Caco-2 (cell line): ENCODE measurements at regions of chr7 and their contacts with region 1.

Region 1: DNA sequence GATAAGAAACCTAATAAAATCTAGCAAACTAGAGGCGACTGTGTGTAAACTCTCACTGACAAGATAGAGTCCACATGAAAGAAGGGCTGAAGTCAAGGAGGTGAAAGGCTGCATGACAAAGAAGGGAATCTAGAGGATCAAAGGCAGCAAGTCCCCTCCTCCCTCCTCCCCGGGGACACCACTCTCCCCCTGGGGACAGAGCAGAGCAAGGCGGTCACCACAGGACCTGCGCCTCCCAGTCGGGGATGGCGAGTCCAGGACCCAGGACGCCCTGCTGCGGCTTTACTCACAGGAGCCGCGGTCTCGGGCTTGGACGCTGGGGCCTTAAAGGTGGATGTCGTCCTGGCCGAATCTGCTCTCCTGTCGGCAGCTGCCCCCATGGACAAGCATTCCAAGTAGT is 22.4 kb downstream of the BRI3 start:
- DNase-seq: peak; percentile 89 to 94
- H3K4me3 ChIP-seq: 0 out of 2 replicates have a peak overlapping the region, but pooled peaks have one; percentile 11
- H3K4me3 Mint-ChIP-seq: peak overlapping the region; percentile 57
- H3K27ac Mint-ChIP-seq: peak overlapping the region; percentile 73
- H3K4me1 ChIP-seq: peaks cover 74% of the 10 kb centered on the region
- H3K4me1 Mint-ChIP-seq: peaks cover 66% of the 10 kb centered on the region
- H3K27me3 ChIP-seq: no peaks in the 10 kb centered on the region
- H3K27me3 Mint-ChIP-seq: no peaks in the 10 kb centered on the region
- CTCF ChIP-seq: peak in 1 of 2 experiments; percentile 27

Region 2: GRCh38 chr7:98280791-98281756 is 22.8 kb before region 1 on chr7 and contains the start of gene BRI3:
- CTCF ChIA-PET with region 1: no interaction called
- POLR2A ChIA-PET with region 1: no interaction called
- intact Hi-C with region 1: loop called (anchors 2 kb)
- DNase-seq: peak; percentile 89 to 94
- H3K4me3 ChIP-seq: peak within 1 kb of the TSS; percentile 81
- H3K4me3 Mint-ChIP-seq: peak within 1 kb of the TSS; percentile 97
- H3K27ac Mint-ChIP-seq: peak within 1 kb of the TSS; percentile 91
- H3K4me1 ChIP-seq: peaks cover 44% of the 10 kb centered on the region
- H3K4me1 Mint-ChIP-seq: peaks cover 43% of the 10 kb centered on the region
- H3K27me3 ChIP-seq: no peaks in the 10 kb centered on the region
- H3K27me3 Mint-ChIP-seq: no peaks in the 10 kb centered on the region
- CTCF ChIP-seq: no peak
- total RNA-seq, gene BRI3: 197 and 224 TPM in 2 replicates

Region 3: DNA sequence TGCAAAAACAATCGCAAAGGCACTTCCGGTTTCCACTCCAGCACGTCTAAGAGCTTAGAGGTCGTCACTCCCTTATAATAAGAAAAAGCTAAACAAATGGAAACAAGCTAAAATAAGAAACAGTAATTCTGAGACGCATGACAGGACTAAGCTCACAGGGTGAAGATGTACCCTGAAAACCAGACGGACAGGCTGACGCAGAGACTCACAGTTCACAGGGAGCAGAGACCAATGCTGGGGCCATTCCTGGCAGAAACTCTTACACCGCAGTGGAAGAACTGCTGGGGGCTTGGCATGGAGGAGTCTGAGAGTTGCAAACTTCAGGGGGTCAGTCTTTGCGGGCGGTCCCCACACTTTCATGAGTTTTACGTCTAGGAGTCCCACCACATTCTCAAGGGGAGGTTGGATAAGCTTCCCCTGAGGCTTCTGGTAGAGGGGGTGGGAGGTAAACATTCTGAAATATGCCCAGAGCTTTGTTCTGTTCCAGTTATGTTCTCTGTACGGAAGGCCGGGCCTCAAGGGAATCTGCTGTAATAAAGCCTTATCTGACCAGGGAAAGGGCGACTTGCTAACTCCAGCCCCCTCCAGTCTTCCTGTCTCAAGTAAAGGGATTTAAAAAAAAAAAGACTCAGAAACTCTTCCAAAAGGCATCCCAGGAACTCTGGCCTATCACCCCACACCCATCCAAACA is 25.3 kb after region 1 on chr7:
- CTCF ChIA-PET with region 1: no interaction called
- POLR2A ChIA-PET with region 1: no interaction called
- intact Hi-C with region 1: loop called (anchors 1 kb)
- DNase-seq: peak; percentile 78 to 88
- H3K4me3 ChIP-seq: no peak overlapping the region
- H3K4me3 Mint-ChIP-seq: peak overlapping the region; percentile 70
- H3K27ac Mint-ChIP-seq: peak overlapping the region; percentile 93
- H3K4me1 ChIP-seq: peaks cover 31% of the 10 kb centered on the region
- H3K4me1 Mint-ChIP-seq: peaks cover 41% of the 10 kb centered on the region
- H3K27me3 ChIP-seq: no peaks in the 10 kb centered on the region
- H3K27me3 Mint-ChIP-seq: no peaks in the 10 kb centered on the region
- CTCF ChIP-seq: no peak

Region 4: DNA sequence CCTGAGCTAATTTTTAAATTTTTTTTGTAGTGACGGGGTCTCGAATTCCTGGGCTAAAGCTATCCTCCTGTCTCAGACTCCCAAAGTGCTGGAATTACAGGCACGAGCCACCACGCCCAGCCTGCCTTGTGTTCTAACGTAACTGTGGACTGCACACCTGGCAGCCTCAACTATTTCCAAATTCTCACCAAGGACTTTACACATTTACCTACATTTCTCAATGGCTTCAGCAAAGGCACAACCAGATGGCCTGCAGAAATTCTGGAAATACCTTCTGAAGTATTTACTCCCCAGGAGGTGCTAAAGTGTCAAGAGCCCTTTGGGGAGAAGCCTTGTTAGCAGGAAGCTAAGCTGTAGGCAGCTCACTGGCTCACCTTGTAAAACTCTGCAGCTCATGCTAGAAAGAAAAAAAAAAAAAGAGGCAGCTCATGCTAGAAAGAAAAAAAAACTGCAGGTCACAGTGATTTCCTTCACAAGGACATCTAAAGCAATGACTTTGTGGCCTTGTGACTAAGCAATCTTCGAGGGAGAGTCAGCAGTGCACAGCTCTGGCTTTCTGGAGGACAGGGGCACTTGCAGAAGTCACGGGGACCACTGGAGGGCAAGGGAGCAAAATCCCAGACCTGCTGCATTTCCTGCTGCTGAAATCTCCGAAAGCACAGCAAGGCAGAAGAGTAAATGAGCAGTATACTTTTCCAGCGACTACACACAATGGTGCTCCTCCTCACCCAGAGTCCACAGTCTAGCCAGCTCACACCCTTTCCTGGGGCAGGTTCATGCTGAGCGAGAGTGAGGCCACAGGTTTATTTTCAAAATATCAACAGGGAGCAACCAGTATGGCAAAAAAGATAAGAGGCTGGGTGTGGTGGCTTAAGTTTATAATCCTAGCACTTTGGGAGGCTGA is 56.6 kb after region 1 on chr7:
- CTCF ChIA-PET with region 1: interaction called, 5 read pairs
- POLR2A ChIA-PET with region 1: no interaction called
- intact Hi-C with region 1: loop called (anchors 2 kb)
- DNase-seq: peak; percentile 70 to 82
- H3K4me3 ChIP-seq: no peak overlapping the region
- H3K4me3 Mint-ChIP-seq: peak overlapping the region; percentile 32
- H3K27ac Mint-ChIP-seq: peak overlapping the region; percentile 91
- H3K4me1 ChIP-seq: peaks cover 35% of the 10 kb centered on the region
- H3K4me1 Mint-ChIP-seq: peaks cover 21% of the 10 kb centered on the region
- H3K27me3 ChIP-seq: no peaks in the 10 kb centered on the region
- H3K27me3 Mint-ChIP-seq: no peaks in the 10 kb centered on the region
- CTCF ChIP-seq: peak in 1 of 2 experiments; percentile 44

Region 5: DNA sequence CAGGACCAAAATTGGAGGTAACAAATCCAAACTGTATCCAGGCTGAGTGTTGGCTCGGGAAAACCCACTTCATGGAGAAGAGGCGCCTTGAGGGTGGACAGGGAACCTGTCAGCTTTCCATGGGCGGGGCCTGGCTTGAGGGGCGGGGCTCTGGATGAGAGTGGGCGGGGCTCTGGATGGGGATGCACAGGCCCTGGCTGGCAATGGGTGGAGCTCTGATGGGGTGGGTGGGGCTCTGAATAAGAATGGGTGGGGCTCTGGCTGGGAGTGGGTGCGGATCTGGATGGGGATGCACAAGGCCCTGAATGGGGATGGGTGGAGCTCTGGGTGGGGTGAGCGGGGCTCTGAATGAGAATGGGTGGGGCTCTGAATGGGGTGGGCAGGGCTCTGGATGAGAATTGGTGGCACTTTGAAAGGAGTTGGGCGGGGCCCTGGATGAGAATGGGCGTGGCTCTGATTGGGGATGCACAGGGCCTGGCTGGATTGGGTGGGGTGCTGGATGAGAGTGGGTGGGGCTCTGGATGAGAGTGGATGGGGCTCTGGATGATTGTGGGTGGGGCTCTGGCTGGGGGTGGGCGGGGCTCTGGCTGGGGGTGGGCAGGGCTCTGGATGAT is 216.6 kb after region 1 on chr7:
- CTCF ChIA-PET with region 1: no interaction called
- POLR2A ChIA-PET with region 1: no interaction called
- intact Hi-C with region 1: no loop called
- DNase-seq: no peak
- H3K4me3 ChIP-seq: no peak overlapping the region
- H3K4me3 Mint-ChIP-seq: no peak overlapping the region
- H3K27ac Mint-ChIP-seq: no peak overlapping the region
- H3K4me1 ChIP-seq: no peaks in the 10 kb centered on the region
- H3K4me1 Mint-ChIP-seq: no peaks in the 10 kb centered on the region
- H3K27me3 ChIP-seq: no peaks in the 10 kb centered on the region
- H3K27me3 Mint-ChIP-seq: no peaks in the 10 kb centered on the region
- CTCF ChIP-seq: no peak